Upper lobe of right lung (tissue), 1 donor: ENCODE measurements at regions of chr14 and their contacts with region 1.

Region 1: GRCh38 chr14:70032016-70032812 is 153.0 kb downstream of the SMOC1 start:
- DNase-seq: no peak
- ATAC-seq: peak; percentile 45
- H3K4me3 ChIP-seq: no peak overlapping the region
- H3K27ac ChIP-seq: no peak overlapping the region
- H3K4me1 ChIP-seq: no peaks in the 10 kb centered on the region
- H3K27me3 ChIP-seq: peaks cover 8% of the 10 kb centered on the region
- CTCF ChIP-seq: no peak

Region 2: GRCh38 chr14:69819607-69820006 is 212.6 kb before region 1 on chr14:
- intact Hi-C with region 1: loop called (anchors 5 kb)
- DNase-seq: no peak
- ATAC-seq: no peak
- H3K4me3 ChIP-seq: no peak overlapping the region
- H3K27ac ChIP-seq: no peak overlapping the region
- H3K4me1 ChIP-seq: no peaks in the 10 kb centered on the region
- H3K27me3 ChIP-seq: peaks cover 10% of the 10 kb centered on the region
- CTCF ChIP-seq: no peak